ENCODE measurements at regions of chr16 and their contacts with region 1.

Region 1: GRCh38 chr16:57300387-57301125 is 16.1 kb upstream of the PLLP start:
- DNase-seq: peak; percentile 99
- H3K4me3 ChIP-seq: peak overlapping the region; percentile 52
- H3K4me3 Mint-ChIP-seq: peak overlapping the region; percentile 21
- H3K27ac Mint-ChIP-seq: no peak overlapping the region
- H3K4me1 ChIP-seq: peaks cover 30% of the 10 kb centered on the region
- H3K4me1 Mint-ChIP-seq: peaks cover 26% of the 10 kb centered on the region
- H3K27me3 ChIP-seq: no peaks in the 10 kb centered on the region
- H3K27me3 Mint-ChIP-seq: no peaks in the 10 kb centered on the region
- CTCF ChIP-seq: peak; percentile 97

Region 2: GRCh38 chr16:57185944-57186871 is 114.3 kb before region 1 on chr16 and contains the starts of genes PSME3IP1 and RSPRY1:
- CTCF ChIA-PET with region 1: no interaction called
- POLR2A ChIA-PET with region 1: no interaction called
- intact Hi-C with region 1: loop called (anchors 1 kb)
- DNase-seq: peak; percentile 100
- H3K4me3 ChIP-seq: peak within 1 kb of the TSS; percentile 92
- H3K4me3 Mint-ChIP-seq: peak within 1 kb of the TSS; percentile 99
- H3K27ac Mint-ChIP-seq: peak within 1 kb of the TSS; percentile 97
- H3K4me1 ChIP-seq: peaks cover 14% of the 10 kb centered on the region; the same call in 1 of the 2 replicates
- H3K4me1 Mint-ChIP-seq: peaks cover 31% of the 10 kb centered on the region
- H3K27me3 ChIP-seq: no peaks in the 10 kb centered on the region
- H3K27me3 Mint-ChIP-seq: no peaks in the 10 kb centered on the region
- CTCF ChIP-seq: no peak
- total RNA-seq, gene PSME3IP1: 141 and 143 TPM in 2 replicates
- total RNA-seq, gene RSPRY1: 56.7 and 57.7 TPM in 2 replicates

Region 3: DNA sequence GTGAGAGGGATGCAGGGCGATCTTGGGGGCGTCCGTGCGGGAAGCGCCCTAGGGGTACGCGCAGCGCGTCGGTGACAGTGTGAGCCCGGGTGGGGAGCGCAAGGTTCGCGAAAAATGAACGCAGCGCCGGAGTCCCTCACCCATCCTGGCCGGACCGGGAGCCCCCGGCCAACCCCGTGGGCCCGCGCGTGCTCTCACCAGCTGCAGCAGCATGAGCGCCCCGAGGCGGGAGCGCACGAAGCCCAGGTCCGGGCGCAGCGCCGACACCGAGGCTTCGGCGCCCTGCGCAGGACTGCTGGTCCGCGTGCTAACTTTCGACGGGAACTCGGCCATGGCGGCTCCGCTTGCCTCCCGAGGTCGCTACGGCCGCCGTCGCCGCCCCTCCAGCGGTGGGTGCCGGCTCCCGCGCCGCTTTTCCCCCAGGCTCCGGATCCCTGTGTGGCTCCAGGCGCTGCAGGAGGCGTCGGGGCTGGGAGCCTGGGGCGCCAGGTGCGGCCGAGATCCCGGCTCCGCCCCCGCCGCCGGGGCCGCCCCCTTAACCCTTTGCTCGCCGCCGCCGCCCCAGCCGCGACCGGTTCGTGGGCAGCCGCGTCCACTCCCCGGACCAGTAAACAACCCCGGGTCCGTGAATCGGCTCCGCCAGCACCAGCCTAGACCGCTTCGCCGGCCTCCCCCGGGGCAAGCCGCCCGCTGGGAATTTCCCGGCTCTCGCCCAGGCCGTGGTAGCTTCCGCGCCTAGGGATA is 16.2 kb before region 1 on chr16 and contains the start of gene PLLP:
- CTCF ChIA-PET with region 1: interaction called, 10 read pairs
- POLR2A ChIA-PET with region 1: interaction called, 4 read pairs
- intact Hi-C with region 1: loop called (anchors 1 kb)
- DNase-seq: peak; percentile 77 to 89
- H3K4me3 ChIP-seq: peak within 1 kb of the TSS; percentile 99
- H3K4me3 Mint-ChIP-seq: peak within 1 kb of the TSS; percentile 80
- H3K27ac Mint-ChIP-seq: peak within 1 kb of the TSS; percentile 82
- H3K4me1 ChIP-seq: peaks cover 28% of the 10 kb centered on the region
- H3K4me1 Mint-ChIP-seq: peaks cover 31% of the 10 kb centered on the region
- H3K27me3 ChIP-seq: no peaks in the 10 kb centered on the region
- H3K27me3 Mint-ChIP-seq: no peaks in the 10 kb centered on the region
- CTCF ChIP-seq: no peak
- total RNA-seq, gene PLLP: 53.0 and 54.0 TPM in 2 replicates

Region 4: GRCh38 chr16:57349212-57350031 is 48.9 kb after region 1 on chr16:
- CTCF ChIA-PET with region 1: no interaction called
- POLR2A ChIA-PET with region 1: interaction called, 3 read pairs
- intact Hi-C with region 1: loop called (anchors 1 kb)
- DNase-seq: no peak
- H3K4me3 ChIP-seq: no peak overlapping the region
- H3K4me3 Mint-ChIP-seq: no peak overlapping the region
- H3K27ac Mint-ChIP-seq: no peak overlapping the region
- H3K4me1 ChIP-seq: no peaks in the 10 kb centered on the region
- H3K4me1 Mint-ChIP-seq: peaks cover 11% of the 10 kb centered on the region
- H3K27me3 ChIP-seq: no peaks in the 10 kb centered on the region
- H3K27me3 Mint-ChIP-seq: no peaks in the 10 kb centered on the region
- CTCF ChIP-seq: no peak

Region 5: GRCh38 chr16:57416122-57416509 is 115.6 kb after region 1 on chr16:
- CTCF ChIA-PET with region 1: interaction called, 88 read pairs
- POLR2A ChIA-PET with region 1: interaction called, 6 read pairs
- intact Hi-C with region 1: loop called (anchors 1 kb)
- DNase-seq: no peak
- H3K4me3 ChIP-seq: no peak overlapping the region
- H3K4me3 Mint-ChIP-seq: no peak overlapping the region
- H3K27ac Mint-ChIP-seq: no peak overlapping the region
- H3K4me1 ChIP-seq: peaks cover 28% of the 10 kb centered on the region
- H3K4me1 Mint-ChIP-seq: peaks cover 34% of the 10 kb centered on the region
- H3K27me3 ChIP-seq: no peaks in the 10 kb centered on the region
- H3K27me3 Mint-ChIP-seq: no peaks in the 10 kb centered on the region
- CTCF ChIP-seq: no peak

Region 6: GRCh38 chr16:57519796-57520360 is 219.3 kb after region 1 on chr16:
- CTCF ChIA-PET with region 1: interaction called, 4 read pairs
- POLR2A ChIA-PET with region 1: no interaction called
- intact Hi-C with region 1: loop called (anchors 1 kb)
- DNase-seq: peak; percentile 85 to 92
- H3K4me3 ChIP-seq: no peak overlapping the region
- H3K4me3 Mint-ChIP-seq: no peak overlapping the region
- H3K27ac Mint-ChIP-seq: peak overlapping the region; percentile 61
- H3K4me1 ChIP-seq: peaks cover 13% of the 10 kb centered on the region
- H3K4me1 Mint-ChIP-seq: peaks cover 19% of the 10 kb centered on the region
- H3K27me3 ChIP-seq: no peaks in the 10 kb centered on the region
- H3K27me3 Mint-ChIP-seq: no peaks in the 10 kb centered on the region
- CTCF ChIP-seq: peak; percentile 96 to 99